ENCODE measurements at regions of chr10 and their contacts with region 1.

Region 1: GRCh38 chr10:115398026-115398425 is 304.9 kb downstream of the ATRNL1 start:
- DNase-seq: no peak
- ATAC-seq: no peak
- H3K4me3 ChIP-seq: no peak overlapping the region
- H3K4me3 Mint-ChIP-seq: no peak overlapping the region
- H3K27ac ChIP-seq: no peak overlapping the region
- H3K27ac Mint-ChIP-seq: no peak overlapping the region
- H3K4me1 ChIP-seq: no peaks in the 10 kb centered on the region
- H3K4me1 Mint-ChIP-seq: no peaks in the 10 kb centered on the region
- H3K27me3 ChIP-seq: no peaks in the 10 kb centered on the region
- H3K27me3 Mint-ChIP-seq: no peaks in the 10 kb centered on the region
- CTCF ChIP-seq: no peak

Region 2: DNA sequence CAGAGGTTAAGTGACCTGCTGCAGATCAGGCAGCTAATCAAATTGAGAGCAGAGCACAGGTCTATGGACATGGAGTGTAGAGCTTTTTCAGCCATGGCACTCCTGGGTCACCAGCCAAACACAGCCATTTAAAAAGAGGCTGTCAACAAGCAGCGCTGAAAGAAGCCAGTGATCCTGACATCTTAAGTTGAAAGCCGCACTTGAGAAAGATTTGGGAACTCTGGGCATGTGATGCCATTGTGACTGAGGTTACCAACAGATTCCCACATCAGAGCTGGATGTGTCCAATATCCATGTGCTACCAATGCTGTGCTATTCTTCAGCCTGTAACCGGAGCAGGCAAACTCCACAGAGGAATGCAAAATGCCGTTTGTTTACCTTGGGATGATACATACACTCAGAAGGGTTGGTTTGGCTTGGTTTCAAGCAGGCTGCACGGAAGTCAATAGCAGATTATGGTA is 683.7 kb before region 1 on chr10:
- CTCF ChIA-PET with region 1: no interaction called
- POLR2A ChIA-PET with region 1: no interaction called
- intact Hi-C with region 1: no loop called
- DNase-seq: no peak
- ATAC-seq: no peak
- H3K4me3 ChIP-seq: no peak overlapping the region
- H3K4me3 Mint-ChIP-seq: no peak overlapping the region
- H3K27ac ChIP-seq: no peak overlapping the region
- H3K27ac Mint-ChIP-seq: no peak overlapping the region
- H3K4me1 ChIP-seq: no peaks in the 10 kb centered on the region
- H3K4me1 Mint-ChIP-seq: no peaks in the 10 kb centered on the region
- H3K27me3 ChIP-seq: no peaks in the 10 kb centered on the region
- H3K27me3 Mint-ChIP-seq: peaks cover 17% of the 10 kb centered on the region
- CTCF ChIP-seq: no peak

Region 3: DNA sequence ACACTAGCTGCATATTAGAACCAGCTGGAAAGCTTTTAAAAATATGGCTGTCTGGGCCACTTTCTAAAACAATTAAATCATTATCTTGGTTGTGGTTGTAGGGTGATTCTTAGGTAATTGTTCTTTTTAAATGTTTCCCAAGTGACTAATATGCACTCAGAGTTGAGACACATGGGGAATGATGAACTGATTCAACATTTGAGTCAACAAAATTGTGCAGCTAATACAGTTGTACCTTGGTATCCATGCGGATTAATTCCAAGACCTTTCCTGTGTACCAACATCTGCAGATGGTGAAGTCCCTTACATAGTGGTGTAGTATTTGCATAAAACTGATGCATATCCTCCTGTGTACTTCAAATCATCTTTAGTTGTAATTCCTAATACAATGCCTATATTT is 62.7 kb before region 1 on chr10:
- CTCF ChIA-PET with region 1: no interaction called
- POLR2A ChIA-PET with region 1: no interaction called
- intact Hi-C with region 1: no loop called
- DNase-seq: no peak
- ATAC-seq: no peak
- H3K4me3 ChIP-seq: no peak overlapping the region
- H3K4me3 Mint-ChIP-seq: no peak overlapping the region
- H3K27ac ChIP-seq: no peak overlapping the region
- H3K27ac Mint-ChIP-seq: no peak overlapping the region
- H3K4me1 ChIP-seq: no peaks in the 10 kb centered on the region
- H3K4me1 Mint-ChIP-seq: no peaks in the 10 kb centered on the region
- H3K27me3 ChIP-seq: no peaks in the 10 kb centered on the region
- H3K27me3 Mint-ChIP-seq: no peaks in the 10 kb centered on the region
- CTCF ChIP-seq: no peak

Region 4: GRCh38 chr10:115417585-115418265 is 19.7 kb after region 1 on chr10:
- CTCF ChIA-PET with region 1: no interaction called
- POLR2A ChIA-PET with region 1: no interaction called
- intact Hi-C with region 1: loop called in 1 of 2 experiments (anchors 1 kb)
- DNase-seq: peak in 1 of 9 experiments; percentile 3
- ATAC-seq: no peak
- H3K4me3 ChIP-seq: no peak overlapping the region
- H3K4me3 Mint-ChIP-seq: no peak overlapping the region
- H3K27ac ChIP-seq: no peak overlapping the region
- H3K27ac Mint-ChIP-seq: no peak overlapping the region
- H3K4me1 ChIP-seq: no peaks in the 10 kb centered on the region
- H3K4me1 Mint-ChIP-seq: no peaks in the 10 kb centered on the region
- H3K27me3 ChIP-seq: no peaks in the 10 kb centered on the region
- H3K27me3 Mint-ChIP-seq: no peaks in the 10 kb centered on the region
- CTCF ChIP-seq: no peak

Region 5: GRCh38 chr10:115456822-115457221 is 58.8 kb after region 1 on chr10:
- CTCF ChIA-PET with region 1: no interaction called
- POLR2A ChIA-PET with region 1: no interaction called
- intact Hi-C with region 1: loop called in 1 of 2 experiments (anchors 10 kb)
- DNase-seq: no peak
- ATAC-seq: no peak
- H3K4me3 ChIP-seq: no peak overlapping the region
- H3K4me3 Mint-ChIP-seq: no peak overlapping the region
- H3K27ac ChIP-seq: no peak overlapping the region
- H3K27ac Mint-ChIP-seq: no peak overlapping the region
- H3K4me1 ChIP-seq: no peaks in the 10 kb centered on the region
- H3K4me1 Mint-ChIP-seq: no peaks in the 10 kb centered on the region
- H3K27me3 ChIP-seq: no peaks in the 10 kb centered on the region
- H3K27me3 Mint-ChIP-seq: no peaks in the 10 kb centered on the region
- CTCF ChIP-seq: no peak